T-cell (primary cell): ENCODE measurements at regions of chr6 and their contacts with region 1.

Region 1: DNA sequence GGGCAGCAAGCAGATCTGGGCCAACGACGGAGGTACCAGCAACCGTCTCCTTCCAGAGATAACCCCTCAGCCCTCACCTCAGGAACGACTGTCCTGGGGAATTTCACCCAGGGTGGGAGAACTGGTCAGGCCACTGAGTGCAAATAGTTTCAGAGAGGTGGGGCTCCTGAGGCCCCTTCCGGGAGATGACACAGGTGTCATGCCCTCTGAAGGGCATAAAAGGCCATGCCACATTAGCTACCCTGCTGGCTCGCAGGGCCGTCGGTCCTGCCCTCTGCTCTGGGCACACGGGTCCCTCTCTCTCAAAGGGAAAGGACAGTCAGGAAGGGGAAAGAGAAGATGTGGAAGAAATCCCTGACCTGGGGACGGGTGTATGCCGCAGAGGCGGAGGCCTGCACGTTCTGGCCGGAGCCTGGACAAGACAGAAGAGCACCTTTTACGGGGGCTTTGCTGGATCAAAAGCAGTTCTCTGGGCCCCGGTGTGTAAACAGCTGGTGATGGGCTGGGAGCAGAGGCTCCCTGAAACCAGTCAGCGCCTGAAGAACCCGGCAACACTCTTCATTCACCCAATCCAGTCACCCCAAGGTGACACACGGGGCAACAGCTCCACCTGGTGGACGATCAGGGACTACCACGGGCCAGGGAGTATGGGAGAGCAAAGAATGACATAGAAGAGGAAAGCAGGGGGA is 6.4 kb upstream of the TAF8 start:
- DNase-seq: peak; percentile 78 to 96 (median 91)
- ATAC-seq: peak; percentile 21 to 28 (median 24)
- H3K4me3 ChIP-seq: peak overlapping the region; percentile 44 to 60
- H3K4me3 Mint-ChIP-seq: peak overlapping the region; percentile 72 to 99 (median 73)
- H3K27ac ChIP-seq: peak overlapping the region; percentile 58
- H3K27ac Mint-ChIP-seq: peak overlapping the region; percentile 95 to 96
- H3K4me1 ChIP-seq: peaks cover 39 to 87% of the 10 kb centered on the region in 2 experiments
- H3K4me1 Mint-ChIP-seq: peaks cover 77 to 88% (median 87%) of the 10 kb centered on the region in 3 donors
- H3K27me3 ChIP-seq: no peaks in the 10 kb centered on the region
- H3K27me3 Mint-ChIP-seq: no peaks in the 10 kb centered on the region

Region 2: DNA sequence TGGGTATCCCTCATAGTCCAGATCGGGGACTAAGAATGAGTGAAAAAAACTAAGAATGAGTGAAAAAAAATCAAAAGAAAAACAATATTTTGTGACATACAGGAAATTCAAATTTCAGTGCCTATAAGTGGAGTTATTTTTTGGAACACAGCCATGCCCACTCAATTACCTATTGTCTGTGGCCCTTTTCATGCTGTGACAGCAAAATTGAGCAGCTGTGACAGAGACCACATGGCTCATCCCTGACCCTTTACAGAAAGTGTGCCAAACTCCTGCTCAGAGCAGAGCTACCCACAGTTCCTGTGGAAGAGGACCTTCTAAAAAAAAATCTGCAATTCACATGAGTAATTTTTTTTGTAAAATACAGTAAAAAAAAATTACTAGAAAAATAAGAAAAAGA is 707.1 kb before region 1 on chr6:
- CTCF ChIA-PET with region 1: no interaction called
- POLR2A ChIA-PET with region 1: no interaction called
- DNase-seq: no peak
- ATAC-seq: no peak
- H3K4me3 ChIP-seq: no peak overlapping the region
- H3K4me3 Mint-ChIP-seq: no peak overlapping the region
- H3K27ac ChIP-seq: no peak overlapping the region
- H3K27ac Mint-ChIP-seq: no peak overlapping the region
- H3K4me1 ChIP-seq: peaks cover 31 to 48% of the 10 kb centered on the region in 2 experiments
- H3K4me1 Mint-ChIP-seq: peaks cover 46 to 50% (median 48%) of the 10 kb centered on the region in 3 donors
- H3K27me3 ChIP-seq: peaks cover 0 to 8% of the 10 kb centered on the region in 2 experiments
- H3K27me3 Mint-ChIP-seq: no peaks in the 10 kb centered on the region

Region 3: DNA sequence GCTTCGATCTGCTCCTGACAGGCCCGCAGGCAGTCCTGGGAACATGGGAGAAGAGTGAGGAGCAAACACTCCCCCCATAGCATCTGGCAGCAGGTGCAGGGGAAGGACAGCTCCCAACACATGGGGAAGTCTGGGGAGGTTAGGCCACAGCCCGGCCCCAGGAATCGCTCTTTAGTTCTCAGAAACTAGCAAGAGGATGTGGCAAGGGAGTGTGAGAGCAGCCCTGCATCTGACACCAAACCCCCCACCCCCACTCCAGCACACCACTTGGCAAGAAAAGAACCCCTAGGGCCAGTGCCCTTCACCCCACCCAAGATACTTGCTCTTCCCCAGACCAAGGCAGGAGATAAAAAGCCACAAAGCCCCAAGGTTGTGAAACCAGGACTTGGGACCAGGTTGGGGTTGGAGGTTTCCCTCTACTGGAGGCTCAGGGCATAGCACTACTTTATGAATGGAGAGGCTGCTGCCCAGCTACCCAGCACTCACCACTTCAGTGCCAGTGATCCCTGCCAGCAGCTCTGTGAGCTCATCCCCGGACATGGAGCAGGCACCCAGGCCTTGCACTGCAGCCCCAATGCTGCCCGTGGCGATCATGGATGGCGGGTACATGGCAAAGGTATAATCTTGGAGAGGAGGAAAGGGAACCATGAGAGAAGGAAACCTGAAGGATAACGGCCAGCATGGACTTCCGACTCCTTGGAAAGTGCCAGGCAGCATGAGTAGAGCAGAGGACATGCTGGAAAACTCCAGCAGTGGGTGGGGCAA is 107.7 kb before region 1 on chr6:
- CTCF ChIA-PET with region 1: interaction called, 11 to 15 read pairs
- POLR2A ChIA-PET with region 1: no interaction called
- DNase-seq: peak; percentile 36 to 89 (median 75)
- ATAC-seq: peak; percentile 59 to 68 (median 66)
- H3K4me3 ChIP-seq: peak overlapping the region; percentile 9 to 35
- H3K4me3 Mint-ChIP-seq: peak overlapping the region; percentile 58 to 93 (median 66)
- H3K27ac ChIP-seq: peak overlapping the region; percentile 50
- H3K27ac Mint-ChIP-seq: peak overlapping the region; percentile 89 to 92
- H3K4me1 ChIP-seq: peaks cover 52 to 76% of the 10 kb centered on the region in 2 experiments
- H3K4me1 Mint-ChIP-seq: peaks cover 68 to 81% (median 75%) of the 10 kb centered on the region in 3 donors
- H3K27me3 ChIP-seq: no peaks in the 10 kb centered on the region
- H3K27me3 Mint-ChIP-seq: no peaks in the 10 kb centered on the region

Region 4: DNA sequence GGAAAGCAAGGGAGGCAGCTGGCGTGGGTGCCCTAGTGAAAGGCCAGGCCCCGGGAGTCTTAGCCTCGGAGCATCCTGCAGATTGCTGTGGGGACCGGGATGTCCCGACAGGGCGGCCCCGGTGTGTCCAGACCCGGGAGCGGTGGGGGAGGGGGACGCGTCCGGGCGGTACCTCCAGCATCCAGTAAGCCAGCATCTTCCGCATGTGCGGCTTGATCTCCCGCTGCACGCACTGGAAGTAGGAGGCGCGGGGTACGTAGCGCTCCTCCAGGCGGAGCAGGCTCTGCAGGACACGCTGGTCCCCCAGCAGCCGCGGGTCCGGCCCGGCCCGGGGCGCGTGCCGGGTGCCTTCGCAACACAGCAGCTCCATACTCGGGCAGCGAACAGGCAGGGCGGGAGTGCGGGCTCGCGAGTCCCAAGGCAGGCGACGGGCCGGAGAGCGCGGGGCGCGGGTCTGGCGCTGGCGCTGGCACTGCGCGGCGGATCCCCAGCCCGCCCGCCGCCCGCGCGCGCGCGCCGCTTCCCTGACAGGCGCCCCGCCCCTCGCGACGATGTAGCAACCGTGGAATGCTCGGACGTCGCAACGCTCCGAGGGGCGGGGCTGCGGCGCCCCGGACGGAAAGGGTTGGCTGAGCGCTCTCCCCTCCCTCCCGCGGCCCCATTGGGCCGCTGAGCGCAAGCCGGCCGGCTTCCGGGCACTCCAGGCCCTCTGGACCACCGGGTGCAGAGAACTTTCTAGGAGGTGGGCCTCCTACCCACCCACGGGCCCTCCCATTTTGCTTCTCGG is 102.5 kb before region 1 on chr6 and contains the start of gene CCND3:
- CTCF ChIA-PET with region 1: interaction called, 11 to 15 read pairs
- POLR2A ChIA-PET with region 1: interaction called, 6 to 8 read pairs
- DNase-seq: peak; percentile 61 to 90 (median 77)
- ATAC-seq: peak; percentile 71 to 75 (median 74)
- H3K4me3 ChIP-seq: peak within 1 kb of the TSS; percentile 73 to 91
- H3K4me3 Mint-ChIP-seq: peak within 1 kb of the TSS; percentile 81 to 93 (median 87)
- H3K27ac ChIP-seq: peak within 1 kb of the TSS; percentile 66
- H3K27ac Mint-ChIP-seq: peak within 1 kb of the TSS; percentile 89 to 92
- H3K4me1 ChIP-seq: peaks cover 56 to 66% of the 10 kb centered on the region in 2 experiments
- H3K4me1 Mint-ChIP-seq: peaks cover 63 to 75% (median 74%) of the 10 kb centered on the region in 3 donors
- H3K27me3 ChIP-seq: no peaks in the 10 kb centered on the region
- H3K27me3 Mint-ChIP-seq: no peaks in the 10 kb centered on the region
- total RNA-seq, gene CCND3: 265 to 532 (median 284) TPM